Panc1 (cell line): ENCODE measurements at regions of chr19 and their contacts with region 1.

Region 1: GRCh38 chr19:49056010-49056901 is 1.3 kb downstream of the CGB7 start:
- DNase-seq: no peak
- ATAC-seq: peak; percentile 92
- H3K4me3 ChIP-seq: peak overlapping the region; percentile 49 to 64
- H3K27ac ChIP-seq: peak overlapping the region; percentile 29; the same call in 1 of the 2 replicates
- H3K4me1 ChIP-seq: no peaks in the 10 kb centered on the region
- H3K27me3 ChIP-seq: no peaks in the 10 kb centered on the region
- CTCF ChIP-seq: no peak; the same call in 1 of the 2 replicates

Region 2: GRCh38 chr19:49017666-49018351 is 38.4 kb before region 1 on chr19:
- CTCF ChIA-PET with region 1: interaction called, 4 read pairs
- POLR2A ChIA-PET with region 1: interaction called, 15 read pairs
- in situ Hi-C with region 1: no loop called
- intact Hi-C with region 1: no loop called
- DNase-seq: no peak
- ATAC-seq: peak; percentile 87
- H3K4me3 ChIP-seq: peak overlapping the region; percentile 43 to 51
- H3K27ac ChIP-seq: peak overlapping the region; percentile 72
- H3K4me1 ChIP-seq: no peaks in the 10 kb centered on the region; the same call in 1 of the 2 replicates
- H3K27me3 ChIP-seq: no peaks in the 10 kb centered on the region
- CTCF ChIP-seq: peak; percentile 69

Region 3: GRCh38 chr19:49097455-49098288 is 41.4 kb after region 1 on chr19:
- CTCF ChIA-PET with region 1: no interaction called
- POLR2A ChIA-PET with region 1: interaction called, 14 read pairs
- in situ Hi-C with region 1: no loop called
- intact Hi-C with region 1: no loop called
- DNase-seq: peak; percentile 65
- ATAC-seq: peak; percentile 88
- H3K4me3 ChIP-seq: no peak overlapping the region
- H3K27ac ChIP-seq: peak overlapping the region; percentile 39; the same call in 1 of the 2 replicates
- H3K4me1 ChIP-seq: peaks cover 6% of the 10 kb centered on the region
- H3K27me3 ChIP-seq: no peaks in the 10 kb centered on the region
- CTCF ChIP-seq: peak; percentile 94

Region 4: DNA sequence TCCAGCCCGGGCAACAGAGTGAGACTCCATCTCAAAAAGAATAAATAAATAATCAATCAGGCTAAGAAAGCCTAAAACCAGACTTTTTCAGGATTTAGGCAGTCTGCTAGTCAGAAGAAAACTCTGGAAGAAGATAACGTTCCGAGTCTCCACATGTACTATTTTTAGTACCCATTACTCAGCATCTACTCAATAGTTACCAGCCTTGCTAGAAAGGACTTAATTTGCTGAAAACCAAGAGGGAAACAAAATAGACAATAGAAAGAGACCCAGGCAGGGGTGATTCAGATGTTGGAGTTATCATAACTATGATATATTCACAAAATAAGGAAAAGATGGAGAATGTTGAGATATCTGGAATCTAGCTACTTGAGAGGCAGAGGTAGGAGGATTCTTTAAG is 54.3 kb after region 1 on chr19:
- CTCF ChIA-PET with region 1: no interaction called
- POLR2A ChIA-PET with region 1: no interaction called
- in situ Hi-C with region 1: no loop called
- intact Hi-C with region 1: no loop called
- DNase-seq: no peak
- ATAC-seq: no peak
- H3K4me3 ChIP-seq: no peak overlapping the region
- H3K27ac ChIP-seq: no peak overlapping the region
- H3K4me1 ChIP-seq: peaks cover 4% of the 10 kb centered on the region; the same call in 1 of the 2 replicates
- H3K27me3 ChIP-seq: no peaks in the 10 kb centered on the region
- CTCF ChIP-seq: no peak